ENCODE measurements at regions of chr9 and their contacts with region 1.

Region 1: GRCh38 chr9:117487555-117488175 is 72.8 kb upstream of the ASTN2 start:
- DNase-seq: peak; percentile 58
- H3K4me3 Mint-ChIP-seq: no peak overlapping the region
- H3K27ac Mint-ChIP-seq: no peak overlapping the region
- H3K4me1 Mint-ChIP-seq: no peaks in the 10 kb centered on the region
- H3K27me3 Mint-ChIP-seq: no peaks in the 10 kb centered on the region

Region 2: GRCh38 chr9:117555964-117556629 is 68.4 kb after region 1 on chr9:
- CTCF ChIA-PET with region 1: interaction called, 14 read pairs
- DNase-seq: peak; percentile 48
- H3K4me3 Mint-ChIP-seq: no peak overlapping the region
- H3K27ac Mint-ChIP-seq: no peak overlapping the region
- H3K4me1 Mint-ChIP-seq: no peaks in the 10 kb centered on the region
- H3K27me3 Mint-ChIP-seq: no peaks in the 10 kb centered on the region

Measured in activated naive CD4-positive, alpha-beta T cell treated with anti-CD3 and anti-CD28 coated beads, Interleukin-2, amount 10 ng/mL, durations not matched to agents 7 days and 5 days (primary cell).